WTC11 (cell line): ENCODE measurements at regions of chr10 and their contacts with region 1.

Region 1: DNA sequence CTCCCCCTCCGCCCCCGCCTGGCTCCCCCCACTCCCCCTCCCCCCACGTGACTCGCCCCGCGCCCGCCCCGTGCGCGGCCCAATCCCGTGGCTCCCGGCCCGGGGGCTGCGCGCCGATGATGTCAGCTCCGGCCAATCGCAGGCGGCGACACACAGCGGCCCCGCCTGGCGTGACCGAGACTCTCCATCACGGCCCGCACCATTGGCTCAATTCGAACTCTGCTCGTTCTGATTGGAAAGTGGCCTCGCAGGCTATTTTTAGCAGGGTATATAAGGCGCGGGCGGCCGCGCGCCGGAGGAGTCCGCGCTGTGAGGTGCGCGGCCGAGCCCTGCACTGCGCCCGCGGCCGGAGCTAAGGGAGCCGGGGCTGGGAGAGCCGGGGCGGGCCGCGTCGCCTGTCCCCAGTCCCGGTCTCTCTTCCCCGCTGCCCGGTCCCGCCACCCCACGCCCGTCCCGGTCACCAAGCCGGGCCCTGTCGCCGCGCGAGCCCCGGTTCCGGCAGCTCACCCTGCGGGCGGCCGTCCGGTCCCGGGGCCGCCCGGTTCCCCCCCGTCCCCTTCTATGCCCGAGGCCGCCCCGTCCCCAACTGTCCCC is 345 bp upstream of the KLF6 start:
- DNase-seq: peak; percentile 98
- ATAC-seq: peak; percentile 80
- H3K4me3 Mint-ChIP-seq: peak overlapping the region; percentile 94
- H3K27ac Mint-ChIP-seq: peak overlapping the region; percentile 91
- H3K4me1 Mint-ChIP-seq: peaks cover 41% of the 10 kb centered on the region
- H3K27me3 Mint-ChIP-seq: no peaks in the 10 kb centered on the region; the same call in 1 of the 2 replicates
- CTCF ChIP-seq: no peak

Region 2: GRCh38 chr10:3761021-3761686 is 24.2 kb before region 1 on chr10:
- CTCF ChIA-PET with region 1: interaction called, 4 read pairs
- POLR2A ChIA-PET with region 1: interaction called, 14 read pairs
- DNase-seq: no peak
- ATAC-seq: no peak
- H3K4me3 Mint-ChIP-seq: no peak overlapping the region
- H3K27ac Mint-ChIP-seq: 0 out of 2 replicates have a peak overlapping the region, but pooled peaks have one; percentile 4
- H3K4me1 Mint-ChIP-seq: peaks cover 33% of the 10 kb centered on the region
- H3K27me3 Mint-ChIP-seq: peaks cover 2% of the 10 kb centered on the region
- CTCF ChIP-seq: no peak

Region 3: DNA sequence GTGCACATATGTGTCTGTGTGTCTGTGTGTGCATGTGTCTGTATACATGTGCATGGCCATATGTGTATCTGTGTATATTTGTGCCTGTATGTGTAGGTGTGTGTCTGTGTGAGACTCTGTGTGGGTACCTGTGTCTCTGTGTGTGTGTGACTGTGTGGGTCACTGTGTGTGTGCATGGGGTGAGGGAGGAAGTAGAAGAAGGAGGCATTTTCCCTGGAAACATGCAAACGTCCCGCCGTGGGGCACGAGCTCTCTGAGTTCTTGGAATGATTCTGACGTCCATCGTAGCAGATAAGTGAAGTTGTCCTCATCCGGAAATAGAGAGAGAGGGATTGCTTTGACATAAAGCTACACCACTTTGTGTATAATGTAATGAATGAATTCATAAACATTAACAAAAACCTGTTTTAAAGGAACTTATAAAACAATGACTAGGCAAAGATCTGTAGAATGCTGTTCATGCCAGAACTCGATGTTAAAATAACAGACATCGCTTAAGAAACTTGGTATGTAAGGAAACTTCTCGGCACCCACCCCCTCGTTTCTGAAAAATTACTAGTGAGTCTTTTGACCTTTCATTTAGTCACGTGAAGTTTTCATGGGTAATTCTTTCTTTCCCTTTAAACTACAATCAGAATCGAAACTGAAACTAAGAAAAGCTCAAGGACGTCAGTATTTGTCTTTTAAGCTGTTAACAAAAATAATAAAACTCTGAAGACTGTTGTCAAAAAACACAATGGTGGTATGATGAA is 43.2 kb after region 1 on chr10:
- CTCF ChIA-PET with region 1: no interaction called
- POLR2A ChIA-PET with region 1: interaction called, 13 read pairs
- DNase-seq: no peak
- ATAC-seq: no peak
- H3K4me3 Mint-ChIP-seq: no peak overlapping the region
- H3K27ac Mint-ChIP-seq: peak overlapping the region; percentile 10; the same call in 1 of the 2 replicates
- H3K4me1 Mint-ChIP-seq: peaks cover 46% of the 10 kb centered on the region
- H3K27me3 Mint-ChIP-seq: no peaks in the 10 kb centered on the region
- CTCF ChIP-seq: no peak

Region 4: DNA sequence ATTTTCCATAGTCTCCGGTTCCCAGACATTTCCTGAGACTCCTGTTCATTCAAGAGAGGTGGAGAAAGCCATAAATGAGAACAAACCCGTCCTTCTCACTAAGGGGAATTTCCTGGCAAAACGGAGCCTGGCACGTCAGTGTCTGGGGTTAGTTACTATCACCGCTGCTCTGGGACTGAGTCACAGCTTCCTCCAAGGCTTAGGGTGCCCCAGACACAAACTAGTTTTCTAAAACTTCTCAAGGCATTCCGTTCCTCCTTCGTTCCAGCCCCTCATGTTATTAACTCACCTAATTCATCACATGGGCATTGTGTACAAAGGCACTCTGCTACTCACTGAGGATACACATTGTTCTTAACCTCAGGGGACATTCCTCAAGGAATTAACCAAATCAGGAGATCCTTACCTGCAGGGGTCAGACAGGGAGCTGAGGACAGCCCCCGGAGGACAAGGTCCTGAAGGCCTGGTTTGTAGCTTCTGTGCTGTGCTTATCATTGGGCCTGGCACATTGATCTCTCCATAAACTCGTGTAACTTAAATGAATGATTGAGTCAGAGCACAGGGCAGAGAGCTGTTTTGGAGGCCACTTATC is 102.6 kb after region 1 on chr10:
- CTCF ChIA-PET with region 1: no interaction called
- POLR2A ChIA-PET with region 1: interaction called, 30 read pairs
- DNase-seq: peak; percentile 37
- ATAC-seq: peak; percentile 92
- H3K4me3 Mint-ChIP-seq: peak overlapping the region; percentile 35
- H3K27ac Mint-ChIP-seq: peak overlapping the region; percentile 88
- H3K4me1 Mint-ChIP-seq: peaks cover 52% of the 10 kb centered on the region
- H3K27me3 Mint-ChIP-seq: no peaks in the 10 kb centered on the region; the same call in 1 of the 2 replicates
- CTCF ChIP-seq: no peak

Region 5: GRCh38 chr10:3955493-3955892 is 170.1 kb after region 1 on chr10:
- CTCF ChIA-PET with region 1: no interaction called
- POLR2A ChIA-PET with region 1: interaction called, 11 read pairs
- DNase-seq: peak; percentile 38
- ATAC-seq: peak; percentile 79
- H3K4me3 Mint-ChIP-seq: peak overlapping the region; percentile 14
- H3K27ac Mint-ChIP-seq: peak overlapping the region; percentile 92
- H3K4me1 Mint-ChIP-seq: peaks cover 41% of the 10 kb centered on the region
- H3K27me3 Mint-ChIP-seq: no peaks in the 10 kb centered on the region
- CTCF ChIP-seq: no peak